Activated B cell treated with CpG ODN at 0.5 μM for 24 hours (primary cell): ENCODE measurements at regions of chr10 and their contacts with region 1.

Region 1: DNA sequence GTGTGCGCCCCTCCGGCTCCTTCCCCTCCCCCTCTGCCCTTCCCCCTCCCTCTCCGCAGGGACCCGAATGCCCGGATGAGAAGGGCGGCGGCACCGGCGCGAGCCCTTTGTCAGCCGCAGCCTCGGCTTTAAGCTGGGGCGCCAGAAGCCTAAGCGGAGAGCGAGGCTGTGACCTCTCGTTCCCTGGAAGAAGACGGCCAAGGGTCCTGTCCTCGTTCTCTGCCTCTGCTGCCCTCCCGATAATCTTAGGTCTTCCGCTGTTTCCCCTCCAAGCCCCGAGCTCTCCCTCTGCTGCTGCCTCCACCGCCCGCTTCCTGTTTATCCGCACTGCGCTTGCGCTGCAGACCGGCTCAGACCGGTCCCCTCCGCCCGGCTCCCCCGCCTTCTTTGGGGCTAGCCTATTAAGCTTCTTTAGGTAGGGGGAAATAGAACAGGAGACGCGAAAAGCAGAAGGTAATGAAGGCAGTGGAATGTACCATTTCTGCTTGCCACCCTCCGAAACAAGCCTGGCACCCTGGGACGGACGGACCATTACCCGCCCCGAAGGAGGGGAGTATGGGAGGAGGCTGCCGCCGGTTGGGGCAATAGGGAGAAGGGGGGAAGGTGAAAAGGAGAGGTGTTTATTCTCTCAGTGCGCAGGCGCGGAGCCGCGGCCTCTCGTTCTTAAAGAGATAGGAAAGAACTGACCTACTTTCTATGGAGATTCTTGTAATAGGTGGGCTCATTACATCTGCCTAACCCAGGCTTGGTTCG is at the start of gene OGA:
- DNase-seq: peak; percentile 91
- ATAC-seq: peak; percentile 86
- H3K4me3 Mint-ChIP-seq: peak within 1 kb of the TSS; percentile 98
- H3K27ac Mint-ChIP-seq: peak within 1 kb of the TSS; percentile 99
- H3K4me1 Mint-ChIP-seq: peaks cover 42% of the 10 kb centered on the region
- H3K27me3 Mint-ChIP-seq: no peaks in the 10 kb centered on the region
- CTCF ChIP-seq: no peak
- total RNA-seq, gene OGA: 209 and 271 TPM in 2 replicates

Region 2: DNA sequence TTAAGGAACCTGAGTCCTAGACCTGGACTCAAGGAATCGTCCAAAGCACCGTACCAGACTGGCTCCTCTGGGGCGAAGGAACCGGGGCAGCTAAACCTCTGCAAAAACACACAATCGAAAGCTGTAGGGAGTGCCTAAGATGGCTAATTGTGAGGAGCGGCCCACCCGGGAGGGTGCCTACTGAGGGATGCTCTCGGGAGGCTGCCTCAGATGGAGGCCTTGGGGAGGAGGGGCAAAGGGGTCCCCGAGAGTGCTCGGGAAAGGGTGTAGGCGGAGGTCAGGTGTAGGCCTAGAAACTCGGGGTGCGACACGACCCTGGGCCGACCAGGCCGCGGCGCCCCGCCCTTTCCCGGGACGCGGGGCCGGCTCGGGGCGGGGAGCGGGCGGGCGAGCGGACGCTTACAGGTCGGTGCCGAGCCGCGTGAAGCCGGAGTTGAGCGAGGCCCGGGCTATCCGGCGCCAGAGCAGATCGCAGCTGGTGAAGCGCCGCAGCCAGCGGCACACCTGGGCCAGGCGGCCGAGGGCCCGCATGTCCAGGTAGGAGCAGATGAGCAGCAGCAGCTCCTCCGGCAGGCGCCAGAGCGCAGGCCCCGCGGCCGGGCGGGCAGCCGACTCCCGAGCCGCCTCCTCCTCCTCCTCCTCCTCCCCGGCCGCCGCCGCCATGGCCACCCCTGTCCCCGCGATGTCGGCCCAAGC is 124.2 kb before region 1 on chr10:
- CTCF ChIA-PET with region 1: no interaction called
- POLR2A ChIA-PET with region 1: interaction called, 6 read pairs
- intact Hi-C with region 1: loop called (anchors 2 kb)
- DNase-seq: peak; percentile 76
- ATAC-seq: peak; percentile 68
- H3K4me3 Mint-ChIP-seq: peak overlapping the region; percentile 97
- H3K27ac Mint-ChIP-seq: peak overlapping the region; percentile 98
- H3K4me1 Mint-ChIP-seq: peaks cover 49% of the 10 kb centered on the region
- H3K27me3 Mint-ChIP-seq: no peaks in the 10 kb centered on the region
- CTCF ChIP-seq: no peak

Region 3: GRCh38 chr10:101807158-101807557 is 11.1 kb before region 1 on chr10:
- CTCF ChIA-PET with region 1: no interaction called
- POLR2A ChIA-PET with region 1: interaction called, 5 read pairs
- intact Hi-C with region 1: loop called (anchors 1 kb)
- DNase-seq: no peak
- ATAC-seq: no peak
- H3K4me3 Mint-ChIP-seq: no peak overlapping the region
- H3K27ac Mint-ChIP-seq: no peak overlapping the region
- H3K4me1 Mint-ChIP-seq: peaks cover 11% of the 10 kb centered on the region
- H3K27me3 Mint-ChIP-seq: no peaks in the 10 kb centered on the region
- CTCF ChIP-seq: no peak

Region 4: DNA sequence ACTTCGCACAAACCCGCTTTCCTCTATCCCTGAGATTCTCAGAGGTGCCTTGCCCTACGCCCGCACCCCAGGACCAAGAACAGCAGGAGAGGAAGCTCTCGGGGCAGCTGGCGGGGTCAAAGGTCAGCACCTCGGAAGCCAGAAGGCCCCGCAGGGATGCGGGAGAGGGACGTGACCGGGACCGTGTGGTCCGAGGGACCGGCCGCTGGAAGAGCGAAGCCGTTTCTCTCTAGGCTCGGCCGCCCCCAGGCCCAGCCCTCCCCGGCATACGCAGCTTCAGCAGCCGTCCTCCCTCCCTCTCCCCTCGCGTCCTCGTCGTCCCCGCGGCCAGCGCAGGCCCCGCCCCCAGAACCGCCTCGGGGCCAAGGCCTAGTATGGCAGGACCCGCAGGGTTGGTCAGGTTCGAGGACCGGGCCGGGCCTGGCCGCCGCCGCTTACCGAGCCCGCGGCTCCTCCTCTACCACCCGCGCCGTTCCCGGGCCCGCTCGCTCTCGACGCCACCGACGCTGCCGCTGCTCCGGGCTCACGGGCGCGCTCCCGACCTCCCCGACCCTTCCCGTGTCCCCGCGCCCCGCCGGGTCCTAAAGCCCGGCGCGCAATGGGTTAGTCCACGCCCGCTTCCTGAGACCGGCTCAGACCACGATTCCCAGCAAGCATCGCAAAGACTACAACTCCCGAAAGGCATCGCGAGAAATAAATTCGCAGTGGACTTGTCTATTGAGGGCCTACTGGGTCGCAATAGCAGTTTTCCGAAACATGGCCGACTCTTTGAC is 237.5 kb after region 1 on chr10 and contains the start of gene ARMH3:
- CTCF ChIA-PET with region 1: no interaction called
- POLR2A ChIA-PET with region 1: interaction called, 14 read pairs
- intact Hi-C with region 1: loop called (anchors 1 kb)
- DNase-seq: peak; percentile 83
- ATAC-seq: peak; percentile 93
- H3K4me3 Mint-ChIP-seq: peak within 1 kb of the TSS; percentile 94
- H3K27ac Mint-ChIP-seq: peak within 1 kb of the TSS; percentile 91
- H3K4me1 Mint-ChIP-seq: peaks cover 45% of the 10 kb centered on the region
- H3K27me3 Mint-ChIP-seq: no peaks in the 10 kb centered on the region
- CTCF ChIP-seq: no peak
- total RNA-seq, gene ARMH3: 26.8 and 35.4 TPM in 2 replicates

Region 5: GRCh38 chr10:102120142-102120990 is 302.1 kb after region 1 on chr10 and contains the start of gene LDB1:
- CTCF ChIA-PET with region 1: interaction called, 4 read pairs
- POLR2A ChIA-PET with region 1: interaction called, 5 read pairs
- intact Hi-C with region 1: loop called (anchors 1 kb)
- DNase-seq: peak; percentile 73
- ATAC-seq: peak; percentile 67
- H3K4me3 Mint-ChIP-seq: peak within 1 kb of the TSS; percentile 94
- H3K27ac Mint-ChIP-seq: peak within 1 kb of the TSS; percentile 94
- H3K4me1 Mint-ChIP-seq: peaks cover 55% of the 10 kb centered on the region
- H3K27me3 Mint-ChIP-seq: no peaks in the 10 kb centered on the region
- CTCF ChIP-seq: no peak
- total RNA-seq, gene LDB1: 54.0 and 61.9 TPM in 2 replicates